CD8-positive, alpha-beta memory T cell (primary cell): ENCODE measurements at regions of chr14 and their contacts with region 1.

Region 1: GRCh38 chr14:50095895-50096294 is 20.5 kb downstream of the VCPKMT start:
- DNase-seq: peak in 2 of 5 donors; percentile 43 to 57
- H3K4me3 ChIP-seq: peak overlapping the region; percentile 39
- H3K4me3 Mint-ChIP-seq: peak overlapping the region; percentile 2 to 66 (median 62)
- H3K27ac ChIP-seq: no peak overlapping the region
- H3K27ac Mint-ChIP-seq: peak overlapping the region; percentile 20 to 96 (median 88)
- H3K4me1 ChIP-seq: peaks cover 70% of the 10 kb centered on the region
- H3K4me1 Mint-ChIP-seq: peaks cover 52 to 67% (median 65%) of the 10 kb centered on the region in 3 donors
- H3K27me3 ChIP-seq: no peaks in the 10 kb centered on the region
- H3K27me3 Mint-ChIP-seq: peaks cover 0 to 1% of the 10 kb centered on the region in 2 donors

Region 2: DNA sequence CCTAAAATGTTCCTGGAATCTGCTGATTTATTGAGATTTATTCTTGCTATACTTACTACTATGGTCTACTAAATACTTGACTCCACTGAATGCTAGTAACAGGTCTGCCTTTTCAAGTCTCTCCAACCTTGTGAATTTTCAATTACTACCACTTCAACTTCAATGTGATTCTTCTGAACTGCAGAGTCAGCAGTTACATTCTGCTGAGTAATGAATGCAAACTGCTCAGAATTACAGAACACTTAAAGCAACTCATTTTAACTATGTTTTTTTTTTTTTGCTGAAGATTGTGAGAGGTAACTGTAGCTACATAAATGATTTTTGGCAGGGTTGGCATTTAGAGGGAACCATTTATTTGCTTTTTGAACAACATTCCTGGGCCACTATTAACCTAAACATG is 161.2 kb before region 1 on chr14:
- CTCF ChIA-PET with region 1: no interaction called
- POLR2A ChIA-PET with region 1: no interaction called
- DNase-seq: no peak
- H3K4me3 ChIP-seq: no peak overlapping the region
- H3K4me3 Mint-ChIP-seq: no peak overlapping the region
- H3K27ac ChIP-seq: no peak overlapping the region
- H3K27ac Mint-ChIP-seq: no peak overlapping the region
- H3K4me1 ChIP-seq: peaks cover 3% of the 10 kb centered on the region
- H3K4me1 Mint-ChIP-seq: peaks cover 8 to 18% (median 9%) of the 10 kb centered on the region in 3 donors
- H3K27me3 ChIP-seq: no peaks in the 10 kb centered on the region
- H3K27me3 Mint-ChIP-seq: no peaks in the 10 kb centered on the region

Region 3: GRCh38 chr14:49982501-49982951 is 113.4 kb before region 1 on chr14:
- CTCF ChIA-PET with region 1: no interaction called
- POLR2A ChIA-PET with region 1: no interaction called
- DNase-seq: peak in 2 of 5 donors; percentile 13 to 29
- H3K4me3 ChIP-seq: no peak overlapping the region
- H3K4me3 Mint-ChIP-seq: peak overlapping the region; percentile 37 to 86 (median 80)
- H3K27ac ChIP-seq: no peak overlapping the region
- H3K27ac Mint-ChIP-seq: peak overlapping the region; percentile 73 to 97 (median 92)
- H3K4me1 ChIP-seq: peaks cover 39% of the 10 kb centered on the region
- H3K4me1 Mint-ChIP-seq: peaks cover 39 to 73% (median 50%) of the 10 kb centered on the region in 3 donors
- H3K27me3 ChIP-seq: no peaks in the 10 kb centered on the region
- H3K27me3 Mint-ChIP-seq: no peaks in the 10 kb centered on the region

Region 4: DNA sequence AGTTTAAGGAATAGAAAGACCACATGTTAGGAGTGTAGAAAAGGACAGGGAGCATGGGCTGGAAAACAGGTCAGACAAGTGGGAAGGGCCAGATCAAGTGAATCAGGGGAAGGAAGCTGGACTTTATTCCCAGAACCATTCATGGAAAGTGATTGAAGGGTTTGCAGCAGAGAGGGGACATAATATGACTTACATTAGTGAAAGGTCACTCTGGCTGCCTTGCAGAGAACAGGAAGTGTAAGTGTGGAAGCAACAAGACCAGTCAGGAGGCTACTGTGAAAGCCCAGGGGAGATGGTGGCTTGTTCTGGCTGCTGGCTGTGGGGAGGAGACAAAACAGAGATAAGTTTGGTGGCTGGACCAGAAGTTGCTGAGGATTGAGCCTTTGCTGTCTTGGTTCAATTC is 48.6 kb before region 1 on chr14:
- CTCF ChIA-PET with region 1: no interaction called
- POLR2A ChIA-PET with region 1: no interaction called
- DNase-seq: no peak
- H3K4me3 ChIP-seq: no peak overlapping the region
- H3K4me3 Mint-ChIP-seq: no peak overlapping the region
- H3K27ac ChIP-seq: no peak overlapping the region
- H3K27ac Mint-ChIP-seq: peak overlapping the region; percentile 37 to 92 (median 80)
- H3K4me1 ChIP-seq: peaks cover 39% of the 10 kb centered on the region
- H3K4me1 Mint-ChIP-seq: peaks cover 44 to 62% (median 55%) of the 10 kb centered on the region in 3 donors
- H3K27me3 ChIP-seq: no peaks in the 10 kb centered on the region
- H3K27me3 Mint-ChIP-seq: no peaks in the 10 kb centered on the region

Region 5: DNA sequence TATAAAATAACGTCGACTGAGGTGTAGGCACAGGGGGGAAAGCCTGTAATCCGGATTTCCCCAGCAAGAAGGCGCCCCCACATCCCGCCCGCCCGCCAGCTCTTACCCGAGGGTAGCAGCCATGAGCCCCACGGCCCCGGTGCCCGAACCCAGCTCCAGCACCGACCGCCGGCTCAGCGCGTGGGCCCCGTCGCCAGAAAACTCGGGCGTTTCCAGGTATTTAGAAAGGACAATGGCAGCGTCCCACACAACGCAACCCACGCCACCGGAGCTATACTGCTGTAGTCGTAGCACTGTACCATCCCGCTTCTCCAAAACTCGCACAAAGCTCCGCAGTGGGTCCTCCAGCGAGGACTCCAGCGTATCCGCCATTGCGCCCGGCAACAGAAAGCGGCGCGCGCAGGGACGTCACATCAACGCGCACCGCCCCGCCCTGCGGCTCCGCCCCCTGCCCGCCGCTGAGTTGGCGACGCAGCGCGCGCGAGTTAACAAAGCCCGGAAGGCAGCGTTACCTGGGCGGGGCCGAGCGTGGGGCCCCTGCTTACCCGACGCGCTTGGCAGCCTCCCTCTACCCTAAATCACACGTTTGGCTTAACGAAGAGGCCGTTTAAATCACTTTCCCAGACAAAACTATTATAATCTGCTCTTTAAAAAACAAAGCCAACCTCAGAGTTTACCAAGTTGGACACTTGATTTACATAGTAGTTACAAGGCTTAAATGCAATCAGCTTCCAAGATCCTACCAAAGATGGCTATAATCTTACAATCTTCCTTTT is 20.5 kb after region 1 on chr14 and contains the start of gene VCPKMT:
- CTCF ChIA-PET with region 1: interaction called, 3 read pairs
- POLR2A ChIA-PET with region 1: interaction called, 10 read pairs
- DNase-seq: peak; percentile 93 to 97 (median 96)
- H3K4me3 ChIP-seq: peak within 1 kb of the TSS; percentile 40
- H3K4me3 Mint-ChIP-seq: peak within 1 kb of the TSS; percentile 95 to 97 (median 97)
- H3K27ac ChIP-seq: peak within 1 kb of the TSS; percentile 78
- H3K27ac Mint-ChIP-seq: peak within 1 kb of the TSS; percentile 94 to 99 (median 99)
- H3K4me1 ChIP-seq: peaks cover 26% of the 10 kb centered on the region
- H3K4me1 Mint-ChIP-seq: peaks cover 23 to 42% (median 29%) of the 10 kb centered on the region in 3 donors
- H3K27me3 ChIP-seq: no peaks in the 10 kb centered on the region
- H3K27me3 Mint-ChIP-seq: no peaks in the 10 kb centered on the region
- total RNA-seq, gene VCPKMT: 16.5 to 19.9 TPM